HEK293 (cell line): ENCODE measurements at regions of chr2 and their contacts with region 1.

Region 1: DNA sequence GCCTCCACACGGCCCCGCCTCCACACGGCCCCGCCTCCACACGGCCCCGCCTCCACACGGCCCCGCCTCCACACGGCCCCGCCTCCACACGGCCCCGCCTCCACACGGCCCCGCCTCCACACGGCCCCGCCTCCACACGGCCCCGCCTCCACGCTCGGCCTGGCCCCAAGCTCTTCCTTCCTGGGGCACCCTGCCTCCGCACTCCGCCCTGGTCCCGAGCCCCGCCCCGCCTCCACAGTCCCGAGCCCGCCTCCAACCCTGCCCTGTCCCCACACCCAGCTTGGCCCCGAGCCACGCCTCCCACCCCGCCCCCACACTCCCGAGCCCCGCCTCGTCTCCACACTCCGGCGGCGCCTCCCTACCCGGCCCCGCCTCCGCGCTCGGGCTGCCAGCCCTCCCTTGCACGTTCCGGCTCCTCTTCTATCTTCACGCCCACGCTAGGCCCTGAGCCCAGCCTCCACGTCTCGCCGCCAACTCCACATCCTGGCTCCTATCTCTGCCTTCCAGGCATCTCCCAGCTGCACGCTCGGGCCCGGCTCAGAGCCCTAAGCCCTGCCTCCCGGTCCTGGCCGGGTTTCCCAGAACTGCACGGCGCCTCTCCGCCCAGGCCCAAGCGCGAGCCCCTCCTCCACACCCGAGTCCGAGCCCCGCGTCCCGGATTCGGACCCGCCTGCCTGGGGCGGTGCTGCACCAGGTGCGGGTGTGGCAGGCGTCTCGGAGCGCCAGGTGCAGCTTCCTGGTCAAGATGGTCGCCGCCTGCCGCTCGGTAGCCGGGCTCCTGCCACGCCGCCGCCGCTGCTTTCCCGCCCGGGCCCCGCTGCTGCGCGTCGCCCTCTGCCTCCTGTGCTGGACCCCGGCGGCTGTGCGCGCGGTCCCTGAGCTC is at the start of gene TMEM87B:
- H3K4me3 ChIP-seq: peak within 1 kb of the TSS; percentile 86
- H3K27ac ChIP-seq: peak within 1 kb of the TSS; percentile 87
- H3K4me1 ChIP-seq: peaks cover 6% of the 10 kb centered on the region
- CTCF ChIP-seq: no peak

Region 2: DNA sequence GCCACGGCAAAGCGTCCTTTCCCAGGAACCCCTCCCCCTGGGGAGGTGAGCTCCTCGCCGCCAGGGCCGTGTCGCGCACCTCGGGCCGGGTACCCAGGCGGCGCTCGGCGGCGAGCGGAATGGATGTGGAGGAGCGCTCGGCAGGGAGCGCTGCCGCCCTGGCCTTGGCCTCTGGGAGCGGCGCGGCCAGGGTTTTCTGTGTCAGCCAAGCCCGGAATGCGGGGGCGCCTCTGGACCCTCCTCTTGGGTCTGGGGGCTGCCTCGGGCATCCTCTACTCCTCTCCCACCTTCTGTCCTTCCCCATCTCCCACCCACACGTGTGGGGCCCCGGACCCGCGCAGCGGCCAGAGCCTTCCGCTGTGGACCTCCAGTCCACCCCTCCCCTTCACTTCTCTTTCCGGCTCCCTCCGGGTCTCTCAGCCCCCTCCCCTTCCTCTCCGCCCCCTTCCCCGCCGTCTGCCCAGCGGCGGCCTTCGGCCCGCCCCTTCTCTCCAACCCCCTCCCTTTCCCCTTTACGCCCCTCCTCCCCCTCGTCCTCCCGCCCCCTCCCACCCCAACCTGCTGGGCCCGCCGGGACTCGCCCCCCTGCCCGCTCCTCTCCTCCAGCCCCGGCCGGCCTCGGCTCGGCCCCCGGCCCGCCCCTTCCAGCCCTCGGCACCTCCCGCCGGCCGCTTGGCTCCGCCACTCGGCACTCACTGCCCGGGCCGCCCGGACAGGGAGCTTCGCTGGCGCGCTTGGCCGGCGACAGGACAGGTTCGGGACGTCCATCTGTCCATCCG is 157.0 kb before region 1 on chr2 and contains the start of gene MERTK:
- CTCF ChIA-PET with region 1: interaction called, 9 read pairs
- POLR2A ChIA-PET with region 1: interaction called, 20 read pairs
- H3K4me3 ChIP-seq: peak within 1 kb of the TSS; percentile 75
- H3K27ac ChIP-seq: peak within 1 kb of the TSS; percentile 76; the same call in 1 of the 2 replicates
- H3K4me1 ChIP-seq: peaks cover 10% of the 10 kb centered on the region; the same call in 1 of the 2 replicates
- CTCF ChIP-seq: peak; percentile 97

Region 3: DNA sequence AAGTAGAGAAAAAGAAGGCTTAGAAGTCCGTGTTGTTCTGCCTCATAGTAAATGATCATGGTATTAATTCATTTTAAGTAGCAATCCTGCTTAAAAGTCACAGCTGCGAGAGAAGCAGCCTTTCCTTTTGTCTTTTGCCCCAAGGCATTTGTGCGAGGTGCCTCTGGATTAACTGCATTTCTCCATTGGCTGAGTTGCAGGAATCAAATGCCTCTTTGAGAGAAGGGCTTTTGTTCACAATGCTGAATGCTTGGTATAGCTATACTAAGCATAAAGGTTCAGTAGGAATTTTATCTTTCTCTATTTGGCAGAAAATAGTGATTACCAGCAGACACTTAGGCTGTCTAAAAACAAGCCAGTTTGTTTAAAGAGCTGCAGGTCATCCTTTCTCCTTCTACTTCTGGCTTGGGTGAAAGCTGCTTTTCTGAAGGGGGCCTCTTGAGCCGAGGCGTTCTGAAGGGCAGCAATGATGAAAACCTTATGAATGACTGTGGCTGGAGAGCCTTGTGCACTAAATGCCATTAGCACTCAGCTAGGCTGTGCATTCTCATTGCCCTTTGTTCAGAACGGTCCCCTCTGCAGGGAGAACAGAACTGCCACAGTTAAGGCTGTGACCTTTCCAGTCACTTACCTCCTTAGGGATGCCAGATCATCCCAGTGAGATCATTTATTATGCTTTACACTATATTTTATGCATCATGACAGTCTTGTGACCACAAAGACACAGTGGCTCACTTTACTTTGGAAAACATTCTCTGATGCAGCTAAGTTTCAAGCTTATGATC is 68.8 kb before region 1 on chr2:
- CTCF ChIA-PET with region 1: no interaction called
- POLR2A ChIA-PET with region 1: no interaction called
- H3K4me3 ChIP-seq: no peak overlapping the region
- H3K27ac ChIP-seq: no peak overlapping the region
- H3K4me1 ChIP-seq: peaks cover 4% of the 10 kb centered on the region; the same call in 1 of the 2 replicates
- CTCF ChIP-seq: no peak

Region 4: DNA sequence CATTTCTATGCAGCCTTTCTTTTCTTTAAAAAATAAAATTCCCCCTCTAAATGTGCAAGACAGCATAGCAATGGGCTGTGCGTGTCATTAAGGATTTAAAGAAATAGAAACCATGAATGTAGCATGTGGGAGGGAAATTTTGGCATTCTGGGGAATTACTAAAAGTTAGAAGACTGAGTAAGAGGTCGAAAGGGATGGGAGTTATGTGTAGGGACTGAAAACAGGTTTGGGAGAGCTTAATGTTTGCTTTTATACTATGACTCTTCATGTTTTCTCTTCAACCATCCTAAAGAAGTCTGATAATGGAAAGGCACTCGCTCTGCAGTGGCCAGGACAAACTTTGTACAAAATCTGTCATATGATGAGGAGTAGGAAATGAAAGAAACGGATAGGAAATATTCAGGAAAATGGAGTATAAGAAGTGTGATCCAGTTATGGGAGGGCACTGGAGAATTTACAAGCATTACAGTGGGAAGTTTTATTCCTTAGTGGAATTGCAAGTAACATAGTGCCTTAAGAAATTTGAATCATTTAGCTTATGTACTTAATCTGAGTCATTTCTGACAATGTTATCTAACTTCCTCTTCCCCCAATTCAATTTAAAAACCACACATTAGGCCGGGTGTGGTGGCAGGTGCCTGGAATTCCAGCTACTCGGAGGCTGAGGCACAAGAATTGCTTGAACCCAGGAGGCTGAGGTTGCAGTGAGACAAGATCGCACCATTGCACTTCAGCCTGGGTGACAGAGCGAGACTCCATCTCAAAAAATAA is 20.6 kb after region 1 on chr2:
- CTCF ChIA-PET with region 1: no interaction called
- POLR2A ChIA-PET with region 1: no interaction called
- H3K4me3 ChIP-seq: no peak overlapping the region
- H3K27ac ChIP-seq: no peak overlapping the region
- H3K4me1 ChIP-seq: no peaks in the 10 kb centered on the region
- CTCF ChIP-seq: no peak

Region 5: GRCh38 chr2:112187805-112188596 is 132.9 kb after region 1 on chr2:
- CTCF ChIA-PET with region 1: no interaction called
- POLR2A ChIA-PET with region 1: no interaction called
- H3K4me3 ChIP-seq: no peak overlapping the region
- H3K27ac ChIP-seq: no peak overlapping the region
- H3K4me1 ChIP-seq: no peaks in the 10 kb centered on the region
- CTCF ChIP-seq: no peak